Activated CD8-positive, alpha-beta T cell treated with anti-CD3 and anti-CD28 coated beads for 36 hours (primary cell): ENCODE measurements at regions of chr2 and their contacts with region 1.

Region 1: GRCh38 chr2:84781942-84782716 is 98.8 kb downstream of the TRABD2A start:
- DNase-seq: peak; percentile 85
- ATAC-seq: peak; percentile 90
- H3K4me3 Mint-ChIP-seq: peak overlapping the region; percentile 36
- H3K27ac Mint-ChIP-seq: peak overlapping the region; percentile 90
- H3K4me1 Mint-ChIP-seq: peaks cover 68% of the 10 kb centered on the region
- H3K27me3 Mint-ChIP-seq: no peaks in the 10 kb centered on the region
- CTCF ChIP-seq: no peak

Region 2: GRCh38 chr2:84532291-84532690 is 249.8 kb before region 1 on chr2:
- CTCF ChIA-PET with region 1: no interaction called
- POLR2A ChIA-PET with region 1: no interaction called
- intact Hi-C with region 1: no loop called
- DNase-seq: no peak
- ATAC-seq: no peak
- H3K4me3 Mint-ChIP-seq: no peak overlapping the region
- H3K27ac Mint-ChIP-seq: no peak overlapping the region
- H3K4me1 Mint-ChIP-seq: peaks cover 11% of the 10 kb centered on the region
- H3K27me3 Mint-ChIP-seq: no peaks in the 10 kb centered on the region
- CTCF ChIP-seq: no peak

Region 3: DNA sequence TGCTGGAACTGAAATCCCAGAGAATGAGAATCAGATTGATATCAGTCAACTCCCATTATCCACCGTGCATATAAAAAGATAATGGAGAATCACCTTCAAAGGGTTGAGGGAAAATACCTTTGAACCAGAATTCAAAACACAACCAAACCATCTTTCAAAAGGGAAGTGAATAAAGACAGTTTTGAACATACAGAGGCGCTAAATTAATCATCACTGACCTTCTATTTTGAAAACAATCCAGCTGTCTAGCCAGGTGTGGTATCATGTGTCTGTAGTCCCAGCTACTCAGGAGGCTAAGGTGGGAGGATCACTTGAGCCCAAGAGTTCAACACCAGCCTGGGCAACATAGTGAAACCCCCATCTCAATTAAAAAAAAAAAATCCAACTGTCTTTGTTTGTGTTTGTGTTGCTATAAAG is 35.1 kb after region 1 on chr2:
- CTCF ChIA-PET with region 1: no interaction called
- POLR2A ChIA-PET with region 1: interaction called, 4 read pairs
- intact Hi-C with region 1: loop called (anchors 1 kb)
- DNase-seq: peak; percentile 56
- ATAC-seq: peak; percentile 83
- H3K4me3 Mint-ChIP-seq: no peak overlapping the region
- H3K27ac Mint-ChIP-seq: peak overlapping the region; percentile 86
- H3K4me1 Mint-ChIP-seq: peaks cover 60% of the 10 kb centered on the region
- H3K27me3 Mint-ChIP-seq: no peaks in the 10 kb centered on the region
- CTCF ChIP-seq: no peak